H1 (cell line): ENCODE measurements at regions of chr22 and their contacts with region 1.

Region 1: DNA sequence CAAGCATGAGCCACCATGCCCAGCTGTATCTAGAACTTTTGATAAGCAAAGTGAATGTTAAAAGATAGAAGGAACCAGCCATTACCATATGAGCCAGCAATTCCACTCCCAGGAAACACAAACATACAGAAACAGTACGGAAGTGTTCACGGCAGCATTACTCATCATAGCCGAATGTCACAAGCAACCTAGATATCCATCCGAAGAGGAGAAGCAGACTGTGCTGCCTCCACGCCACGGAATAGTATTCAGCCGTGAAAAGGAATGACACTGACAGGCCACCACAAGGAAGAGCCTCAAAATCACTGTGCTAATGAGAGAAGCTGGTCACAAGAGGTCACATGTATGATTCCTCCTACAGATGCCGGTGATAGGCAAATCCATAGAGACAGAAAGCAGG is 17.6 kb upstream of the MGAT3 start:
- DNase-seq: no peak
- H3K4me3 ChIP-seq: no peak overlapping the region
- H3K27ac ChIP-seq: no peak overlapping the region
- H3K4me1 ChIP-seq: peaks cover 0 to 8% (median 6%) of the 10 kb centered on the region in 4 experiments; a peak in 3 of 7 replicates
- H3K27me3 ChIP-seq: peaks cover 0 to 3% (median 1%) of the 10 kb centered on the region in 4 experiments; a peak in 2 of 7 replicates
- CTCF ChIP-seq: no peak
- EP300 ChIP-seq: no peak
- POLR2A ChIP-seq: no peak
- RAD21 ChIP-seq: no peak

Region 2: GRCh38 chr22:39395936-39396796 is 43.0 kb before region 1 on chr22:
- CTCF ChIA-PET with region 1: interaction called, 10 read pairs
- POLR2A ChIA-PET with region 1: interaction called, 5 read pairs
- DNase-seq: no peak
- H3K4me3 ChIP-seq: no peak overlapping the region
- H3K27ac ChIP-seq: no peak overlapping the region
- H3K4me1 ChIP-seq: peaks cover 0 to 3% (median under 1%) of the 10 kb centered on the region in 4 experiments; a peak in 1 of 7 replicates
- H3K27me3 ChIP-seq: no peaks in the 10 kb centered on the region
- CTCF ChIP-seq: no peak
- EP300 ChIP-seq: no peak
- POLR2A ChIP-seq: no peak
- RAD21 ChIP-seq: no peak

Region 3: GRCh38 chr22:39418696-39419095 is 20.5 kb before region 1 on chr22:
- CTCF ChIA-PET with region 1: interaction called, 10 read pairs
- POLR2A ChIA-PET with region 1: interaction called, 4 read pairs
- DNase-seq: no peak
- H3K4me3 ChIP-seq: no peak overlapping the region
- H3K27ac ChIP-seq: no peak overlapping the region
- H3K4me1 ChIP-seq: no peaks in the 10 kb centered on the region
- H3K27me3 ChIP-seq: no peaks in the 10 kb centered on the region
- CTCF ChIP-seq: no peak
- EP300 ChIP-seq: no peak
- POLR2A ChIP-seq: no peak
- RAD21 ChIP-seq: no peak

Region 4: GRCh38 chr22:39428578-39429071 is 10.5 kb before region 1 on chr22:
- CTCF ChIA-PET with region 1: interaction called, 10 read pairs
- POLR2A ChIA-PET with region 1: interaction called, 6 read pairs
- DNase-seq: peak; percentile 80 to 85
- H3K4me3 ChIP-seq: peak overlapping the region in 2 of 4 experiments; percentile 19 to 32; a peak in 2 of 8 replicates
- H3K27ac ChIP-seq: peak overlapping the region; percentile 46; the same call in 1 of the 2 replicates
- H3K4me1 ChIP-seq: peaks cover 8 to 23% (median 17%) of the 10 kb centered on the region in 4 experiments
- H3K27me3 ChIP-seq: no peaks in the 10 kb centered on the region
- CTCF ChIP-seq: peak in 2 of 3 experiments; percentile 43 to 52; a peak in 3 of 4 replicates
- EP300 ChIP-seq: peak; percentile 27 to 90; a peak in 2 of 3 replicates
- POLR2A ChIP-seq: peak in 1 of 2 experiments; percentile 50; a peak in 1 of 3 replicates
- RAD21 ChIP-seq: peak; percentile 38 to 43

Region 5: DNA sequence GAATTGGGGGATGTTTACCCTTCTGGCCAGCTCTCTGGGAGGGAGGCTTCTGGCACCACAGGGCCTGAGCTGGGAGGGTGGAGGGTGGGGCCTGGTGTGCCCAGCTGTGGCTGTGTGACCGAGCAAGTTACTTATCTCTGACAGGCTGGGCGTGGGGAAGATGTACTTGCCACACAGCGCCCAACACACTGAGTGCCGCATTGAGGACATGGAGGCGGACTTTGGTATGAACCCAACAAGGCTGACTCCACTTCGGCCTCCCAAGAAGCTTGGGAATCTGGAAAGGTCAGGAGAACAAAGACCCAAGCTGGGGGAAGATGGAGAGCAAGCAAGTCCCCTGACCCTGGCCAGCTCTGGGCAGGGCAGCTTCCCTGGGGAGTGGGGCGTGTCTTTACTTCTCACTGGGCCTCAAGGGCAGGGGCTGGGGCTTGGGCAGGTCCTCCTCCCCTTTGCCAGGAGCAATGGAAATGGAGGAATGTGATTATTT is 15.3 kb after region 1 on chr22:
- CTCF ChIA-PET with region 1: interaction called, 32 read pairs
- POLR2A ChIA-PET with region 1: interaction called, 7 read pairs
- DNase-seq: no peak
- H3K4me3 ChIP-seq: no peak overlapping the region
- H3K27ac ChIP-seq: no peak overlapping the region
- H3K4me1 ChIP-seq: peaks cover 0 to 30% (median 20%) of the 10 kb centered on the region in 4 experiments; a peak in 6 of 7 replicates
- H3K27me3 ChIP-seq: peaks cover 5 to 24% (median 18%) of the 10 kb centered on the region in 4 experiments; a peak in 6 of 7 replicates
- CTCF ChIP-seq: no peak
- EP300 ChIP-seq: no peak
- POLR2A ChIP-seq: no peak
- RAD21 ChIP-seq: no peak